CD4-positive, alpha-beta memory T cell (primary cell): ENCODE measurements at regions of chr12 and their contacts with region 1.

Region 1: DNA sequence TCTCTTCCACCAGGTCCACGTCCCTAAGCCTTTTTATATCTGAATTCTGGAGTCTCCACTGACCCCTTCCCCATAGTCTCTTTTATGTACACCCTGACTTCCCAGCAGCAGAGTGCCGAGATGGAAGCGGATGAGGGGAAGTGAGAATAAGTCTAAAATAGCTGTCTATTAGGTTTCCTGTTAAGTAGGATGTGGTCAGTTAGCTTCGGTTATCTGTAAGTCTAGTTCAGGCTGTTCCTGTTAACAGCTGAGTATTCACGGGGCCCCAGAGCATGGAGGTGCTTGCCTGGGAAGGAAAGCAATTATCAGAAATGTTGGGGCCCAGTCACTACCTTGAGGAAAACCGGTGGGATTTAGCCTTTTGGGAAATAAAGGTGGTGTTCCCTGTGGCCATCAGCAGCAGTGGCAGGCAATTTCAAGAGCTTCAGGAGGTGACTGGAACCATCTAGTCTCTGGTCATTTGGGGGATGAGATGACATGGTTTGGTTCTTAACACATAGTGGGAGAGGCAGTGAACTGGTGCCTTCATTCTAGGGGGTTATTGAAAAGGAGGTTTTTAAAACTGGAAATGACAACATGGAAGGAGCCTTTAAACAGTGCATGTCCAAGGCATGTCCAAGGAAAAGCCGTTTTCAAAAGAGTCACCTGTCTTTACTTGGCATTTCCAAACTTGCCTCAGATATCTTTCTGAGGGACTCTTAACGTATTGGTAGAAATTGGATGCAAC is 21.8 kb downstream of the CHST11 start:
- DNase-seq: peak; percentile 43 to 63 (median 55)
- H3K4me3 ChIP-seq: peak overlapping the region in 1 of 2 donors; percentile 25
- H3K4me3 Mint-ChIP-seq: peak overlapping the region; percentile 87 to 98 (median 93)
- H3K27ac ChIP-seq: peak overlapping the region; percentile 41
- H3K27ac Mint-ChIP-seq: peak overlapping the region; percentile 92 to 99 (median 97)
- H3K4me1 ChIP-seq: peaks cover 87% of the 10 kb centered on the region
- H3K4me1 Mint-ChIP-seq: peaks cover 73 to 92% (median 83%) of the 10 kb centered on the region in 4 donors
- H3K27me3 ChIP-seq: no peaks in the 10 kb centered on the region
- H3K27me3 Mint-ChIP-seq: no peaks in the 10 kb centered on the region

Region 2: GRCh38 chr12:104462931-104463339 is 15.6 kb before region 1 on chr12:
- CTCF ChIA-PET with region 1: interaction called, 23 read pairs
- POLR2A ChIA-PET with region 1: interaction called, 172 read pairs
- intact Hi-C with region 1: loop called (anchors 1 kb)
- DNase-seq: peak; percentile 53 to 83 (median 58)
- H3K4me3 ChIP-seq: peak overlapping the region; percentile 2 to 21
- H3K4me3 Mint-ChIP-seq: peak overlapping the region; percentile 79 to 93 (median 84)
- H3K27ac ChIP-seq: peak overlapping the region; percentile 62
- H3K27ac Mint-ChIP-seq: peak overlapping the region; percentile 85 to 96 (median 93)
- H3K4me1 ChIP-seq: peaks cover 86% of the 10 kb centered on the region
- H3K4me1 Mint-ChIP-seq: peaks cover 60 to 95% (median 75%) of the 10 kb centered on the region in 4 donors
- H3K27me3 ChIP-seq: no peaks in the 10 kb centered on the region
- H3K27me3 Mint-ChIP-seq: no peaks in the 10 kb centered on the region

Region 3: GRCh38 chr12:104494137-104494792 is 15.7 kb after region 1 on chr12:
- CTCF ChIA-PET with region 1: interaction called, 5 read pairs
- POLR2A ChIA-PET with region 1: interaction called, 34 read pairs
- intact Hi-C with region 1: no loop called
- DNase-seq: peak; percentile 29 to 76 (median 42)
- H3K4me3 ChIP-seq: peak overlapping the region in 1 of 2 donors; percentile 32
- H3K4me3 Mint-ChIP-seq: peak overlapping the region; percentile 66 to 94 (median 84)
- H3K27ac ChIP-seq: peak overlapping the region; percentile 50
- H3K27ac Mint-ChIP-seq: peak overlapping the region; percentile 88 to 99 (median 94)
- H3K4me1 ChIP-seq: peaks cover 93% of the 10 kb centered on the region
- H3K4me1 Mint-ChIP-seq: peaks cover 77 to 96% (median 86%) of the 10 kb centered on the region in 4 donors
- H3K27me3 ChIP-seq: no peaks in the 10 kb centered on the region
- H3K27me3 Mint-ChIP-seq: no peaks in the 10 kb centered on the region

Region 4: GRCh38 chr12:104499668-104500332 is 21.2 kb after region 1 on chr12:
- CTCF ChIA-PET with region 1: interaction called, 5 read pairs
- POLR2A ChIA-PET with region 1: interaction called, 34 read pairs
- intact Hi-C with region 1: no loop called
- DNase-seq: no peak
- H3K4me3 ChIP-seq: no peak overlapping the region
- H3K4me3 Mint-ChIP-seq: peak overlapping the region in 4 of 8 donors; percentile 10 to 89 (median 52)
- H3K27ac ChIP-seq: no peak overlapping the region
- H3K27ac Mint-ChIP-seq: peak overlapping the region in 6 of 7 donors; percentile 17 to 99 (median 92)
- H3K4me1 ChIP-seq: peaks cover 95% of the 10 kb centered on the region
- H3K4me1 Mint-ChIP-seq: peaks cover 69 to 97% (median 85%) of the 10 kb centered on the region in 4 donors
- H3K27me3 ChIP-seq: no peaks in the 10 kb centered on the region
- H3K27me3 Mint-ChIP-seq: no peaks in the 10 kb centered on the region